Ovary (tissue), 10 donors: ENCODE measurements at regions of chr10 and their contacts with region 1.

Region 1: DNA sequence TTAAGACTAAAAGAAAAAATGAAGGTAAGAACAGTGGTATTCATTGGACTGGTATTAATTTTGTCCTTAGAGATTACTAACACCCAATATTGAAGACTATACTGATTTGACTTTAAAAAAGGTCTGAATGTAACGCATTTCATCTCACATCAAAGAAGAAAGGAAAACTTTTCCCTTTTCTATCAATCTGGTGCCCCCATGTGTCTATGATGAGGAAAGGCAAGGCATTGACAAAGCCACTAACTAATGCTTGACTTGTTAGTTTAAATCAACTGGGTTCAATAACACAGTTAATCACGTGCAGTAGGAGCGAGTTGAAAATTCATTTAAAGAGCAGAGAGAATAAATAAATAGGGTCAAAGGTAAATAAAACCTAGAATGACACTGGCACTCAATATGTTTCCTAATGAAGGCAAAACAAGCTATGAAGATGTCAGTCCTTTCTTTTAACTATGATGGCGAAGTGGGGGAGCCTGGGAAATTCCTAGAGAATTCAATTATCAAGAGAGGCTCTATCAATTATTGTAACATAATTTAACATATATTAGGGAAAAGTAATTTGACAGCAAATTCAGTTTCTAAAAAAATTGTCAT is 180.9 kb downstream of the ANK3 start:
- DNase-seq: no peak
- H3K4me3 ChIP-seq: no peak overlapping the region
- H3K27ac ChIP-seq: no peak overlapping the region
- H3K4me1 ChIP-seq: no peaks in the 10 kb centered on the region
- H3K27me3 ChIP-seq: no peaks in the 10 kb centered on the region
- CTCF ChIP-seq: peak in 2 of 3 donors; percentile 31 to 71
- EP300 ChIP-seq: no peak
- POLR2A ChIP-seq: no peak

Region 2: DNA sequence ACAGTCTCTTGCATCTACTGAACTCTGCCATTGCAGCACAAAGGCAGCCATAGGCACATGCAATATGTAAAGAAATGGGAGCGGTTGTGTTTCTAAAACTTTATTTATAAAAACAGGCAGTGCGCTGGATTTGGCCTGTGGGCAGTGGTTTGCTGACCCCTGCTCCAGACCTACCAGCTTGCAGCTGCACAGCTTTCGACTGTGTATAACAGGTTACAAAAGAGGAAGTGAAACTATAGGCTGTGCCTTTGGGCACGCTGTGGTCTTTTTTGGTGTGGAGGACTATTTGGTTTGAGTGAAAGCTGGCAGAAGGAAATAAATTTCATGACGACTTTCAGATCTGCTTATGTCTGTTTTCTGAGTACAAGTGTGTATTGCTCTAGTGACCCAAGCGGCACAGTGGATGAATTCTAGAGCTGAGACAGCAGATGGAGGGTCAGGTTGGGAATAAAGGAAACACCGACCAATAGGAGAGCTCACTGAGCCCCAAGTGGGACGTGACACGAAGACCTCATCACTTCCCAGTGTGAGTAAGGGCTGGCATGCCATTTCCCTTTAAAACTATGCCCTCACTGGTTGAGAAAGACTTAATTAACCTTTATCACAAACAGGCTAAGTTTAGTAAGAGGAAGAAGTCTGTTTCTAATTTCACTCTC is 28.2 kb after region 1 on chr10:
- intact Hi-C with region 1: no loop called
- DNase-seq: no peak
- H3K4me3 ChIP-seq: no peak overlapping the region
- H3K27ac ChIP-seq: no peak overlapping the region
- H3K4me1 ChIP-seq: peaks cover 4% of the 10 kb centered on the region
- H3K27me3 ChIP-seq: no peaks in the 10 kb centered on the region
- CTCF ChIP-seq: no peak
- EP300 ChIP-seq: no peak
- POLR2A ChIP-seq: no peak

Region 3: DNA sequence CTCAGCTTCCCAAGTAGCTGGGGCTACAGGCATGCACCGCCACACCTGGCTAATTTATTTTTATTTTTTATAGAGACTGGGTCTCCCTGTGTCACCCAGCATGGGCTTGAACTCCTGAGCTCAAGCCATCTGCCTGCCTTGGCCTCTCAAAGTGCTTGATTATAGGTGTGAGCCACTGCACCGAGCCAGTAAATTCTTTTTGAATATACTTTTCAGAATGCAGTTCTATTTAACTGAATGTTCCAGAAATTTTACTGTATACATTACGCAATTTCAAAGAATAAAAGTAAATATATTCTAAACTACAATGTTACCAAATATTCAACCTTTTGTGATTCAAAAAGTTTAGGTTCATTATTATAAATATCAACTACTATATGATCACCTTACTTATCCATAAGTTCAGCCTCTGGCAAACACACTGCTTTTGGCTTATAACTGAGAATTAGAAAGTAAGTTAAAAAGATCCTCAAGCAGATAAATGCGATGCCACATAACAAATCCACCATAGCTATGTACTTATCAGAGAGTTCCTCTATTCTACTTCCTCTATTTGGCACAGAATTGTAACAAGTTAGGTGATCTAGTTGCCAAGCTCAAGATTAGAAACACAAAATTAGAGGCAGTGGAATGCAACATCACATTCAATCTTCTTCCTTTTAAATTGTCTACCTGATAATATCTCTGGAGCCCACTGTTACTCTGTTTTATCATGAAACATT is 62.7 kb after region 1 on chr10:
- intact Hi-C with region 1: no loop called
- DNase-seq: no peak
- H3K4me3 ChIP-seq: no peak overlapping the region
- H3K27ac ChIP-seq: no peak overlapping the region
- H3K4me1 ChIP-seq: no peaks in the 10 kb centered on the region
- H3K27me3 ChIP-seq: no peaks in the 10 kb centered on the region
- CTCF ChIP-seq: no peak
- EP300 ChIP-seq: no peak
- POLR2A ChIP-seq: no peak

Region 4: DNA sequence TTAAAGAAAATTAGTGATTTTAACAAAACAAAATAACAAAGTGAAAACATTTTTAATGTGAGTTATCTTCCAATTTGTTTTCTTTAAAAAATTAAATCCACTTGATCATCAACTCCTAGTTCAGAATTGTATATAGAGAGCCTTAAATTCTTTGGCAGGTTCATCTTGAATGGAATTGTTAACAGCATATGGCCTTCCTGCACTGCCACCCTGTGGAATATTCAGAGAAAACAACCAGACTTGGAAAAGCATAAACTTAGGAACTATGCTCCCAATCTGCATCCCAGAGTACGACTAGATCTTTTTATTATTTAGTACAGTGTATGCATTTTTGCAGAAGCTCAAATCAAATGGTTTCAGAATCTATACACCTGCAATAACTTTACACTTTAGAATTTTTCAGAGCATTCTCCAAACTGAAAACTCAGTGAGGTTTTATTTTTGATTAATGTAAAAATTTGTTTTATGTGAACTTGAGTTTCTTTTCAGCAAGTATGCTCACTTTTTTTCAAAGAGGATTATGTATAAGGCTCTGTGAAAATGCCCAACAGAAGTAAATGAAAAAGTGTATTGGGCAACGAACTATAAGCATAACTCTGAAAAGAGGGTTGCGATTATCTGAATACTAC is 225.8 kb after region 1 on chr10:
- intact Hi-C with region 1: loop called in 1 of 4 experiments (anchors 10 kb)
- DNase-seq: peak in 3 of 5 donors; percentile 11 to 39 (median 25)
- H3K4me3 ChIP-seq: no peak overlapping the region
- H3K27ac ChIP-seq: no peak overlapping the region
- H3K4me1 ChIP-seq: no peaks in the 10 kb centered on the region
- H3K27me3 ChIP-seq: no peaks in the 10 kb centered on the region
- CTCF ChIP-seq: peak in 2 of 3 donors; percentile 60 to 63
- EP300 ChIP-seq: no peak
- POLR2A ChIP-seq: no peak